ENCODE measurements at regions of chr17 and their contacts with region 1.

Region 1: DNA sequence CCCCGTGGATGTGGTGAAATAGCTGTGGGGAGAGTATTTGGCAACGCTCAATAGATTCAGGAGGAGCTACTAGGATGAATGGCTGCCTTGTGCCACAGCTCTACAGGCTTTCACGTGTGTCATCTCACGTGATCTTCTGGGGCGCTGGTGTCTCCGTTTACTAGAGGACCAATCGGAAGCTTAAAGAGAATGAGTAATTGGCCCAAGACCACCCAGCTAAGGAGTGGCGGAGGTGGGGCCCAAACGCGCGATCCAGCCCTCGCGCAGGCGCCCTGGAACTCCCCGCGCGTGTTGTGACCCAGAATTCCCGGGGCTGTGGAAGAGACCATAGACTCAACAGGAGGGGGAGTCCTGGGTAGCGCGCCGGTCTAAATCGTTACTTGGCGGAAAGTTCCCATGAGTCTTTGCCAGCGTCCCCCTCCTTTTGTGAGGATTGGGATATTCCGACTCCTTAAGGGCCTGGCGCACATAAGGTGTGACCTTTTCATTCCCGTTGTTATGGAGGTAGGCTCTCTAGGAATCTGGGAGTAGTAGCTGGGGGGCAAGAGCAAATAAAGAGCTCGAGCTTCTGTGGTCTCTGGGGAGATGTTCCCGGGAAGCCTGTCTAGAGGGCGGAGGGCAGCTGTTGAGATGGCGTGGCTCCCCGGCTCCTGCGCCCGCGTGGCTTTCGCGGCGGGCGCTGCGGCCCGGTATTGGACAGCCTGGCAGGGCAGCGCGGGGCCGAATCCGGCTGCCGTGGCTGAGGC is 23.4 kb downstream of the TRPV2 start:
- DNase-seq: peak; percentile 100
- H3K4me3 ChIP-seq: peak overlapping the region; percentile 77 to 97 (median 89)
- H3K27ac ChIP-seq: peak overlapping the region; percentile 67
- H3K4me1 ChIP-seq: peaks cover 35% of the 10 kb centered on the region
- H3K27me3 ChIP-seq: no peaks in the 10 kb centered on the region
- CTCF ChIP-seq: no peak
- POLR2A ChIP-seq: peak; percentile 99

Region 2: DNA sequence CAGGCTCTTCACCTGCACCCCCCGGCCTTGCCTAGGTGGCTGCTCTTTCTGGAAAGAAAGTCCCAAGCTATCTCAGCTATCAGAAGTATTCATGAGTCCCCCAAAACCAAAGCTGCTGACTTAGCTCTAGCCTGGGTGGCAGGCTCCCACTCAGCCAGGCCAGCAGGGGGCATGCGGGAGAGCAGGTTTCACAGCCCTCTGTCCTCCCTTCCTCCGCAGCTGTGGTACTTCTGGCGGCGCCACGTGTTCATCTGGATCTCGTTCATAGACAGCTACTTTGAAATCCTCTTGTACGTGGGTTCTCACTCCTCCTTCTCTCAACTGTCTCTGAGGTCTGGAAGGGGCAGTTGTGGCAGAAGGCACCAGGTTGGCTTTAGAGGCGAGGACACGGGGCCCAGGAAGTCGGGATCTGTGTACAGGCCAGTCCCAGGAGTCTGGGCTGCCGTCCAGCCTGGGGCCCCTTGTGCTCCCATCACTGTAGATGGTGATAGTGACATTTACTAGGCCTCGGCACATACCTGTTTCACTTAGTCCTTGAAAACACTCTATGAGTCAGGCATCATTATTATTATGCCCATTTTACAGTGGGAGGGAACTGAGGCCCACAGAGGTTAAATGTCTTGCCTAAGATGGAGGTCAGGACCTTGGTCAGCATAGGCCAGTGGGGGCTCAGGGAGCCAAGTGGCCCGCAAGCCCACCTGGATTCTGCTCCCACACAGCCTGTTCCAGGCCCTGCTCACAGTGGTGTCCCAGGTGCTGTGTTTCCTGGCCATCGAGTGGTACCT is 10.4 kb before region 1 on chr17:
- CTCF ChIA-PET with region 1: interaction called, 20 read pairs
- POLR2A ChIA-PET with region 1: interaction called, 5 read pairs
- dilution Hi-C with region 1: no loop called
- intact Hi-C with region 1: no loop called
- DNase-seq: peak; percentile 29
- H3K4me3 ChIP-seq: no peak overlapping the region
- H3K27ac ChIP-seq: no peak overlapping the region
- H3K4me1 ChIP-seq: no peaks in the 10 kb centered on the region
- H3K27me3 ChIP-seq: no peaks in the 10 kb centered on the region
- CTCF ChIP-seq: peak; percentile 61 to 81
- POLR2A ChIP-seq: no peak

Region 3: DNA sequence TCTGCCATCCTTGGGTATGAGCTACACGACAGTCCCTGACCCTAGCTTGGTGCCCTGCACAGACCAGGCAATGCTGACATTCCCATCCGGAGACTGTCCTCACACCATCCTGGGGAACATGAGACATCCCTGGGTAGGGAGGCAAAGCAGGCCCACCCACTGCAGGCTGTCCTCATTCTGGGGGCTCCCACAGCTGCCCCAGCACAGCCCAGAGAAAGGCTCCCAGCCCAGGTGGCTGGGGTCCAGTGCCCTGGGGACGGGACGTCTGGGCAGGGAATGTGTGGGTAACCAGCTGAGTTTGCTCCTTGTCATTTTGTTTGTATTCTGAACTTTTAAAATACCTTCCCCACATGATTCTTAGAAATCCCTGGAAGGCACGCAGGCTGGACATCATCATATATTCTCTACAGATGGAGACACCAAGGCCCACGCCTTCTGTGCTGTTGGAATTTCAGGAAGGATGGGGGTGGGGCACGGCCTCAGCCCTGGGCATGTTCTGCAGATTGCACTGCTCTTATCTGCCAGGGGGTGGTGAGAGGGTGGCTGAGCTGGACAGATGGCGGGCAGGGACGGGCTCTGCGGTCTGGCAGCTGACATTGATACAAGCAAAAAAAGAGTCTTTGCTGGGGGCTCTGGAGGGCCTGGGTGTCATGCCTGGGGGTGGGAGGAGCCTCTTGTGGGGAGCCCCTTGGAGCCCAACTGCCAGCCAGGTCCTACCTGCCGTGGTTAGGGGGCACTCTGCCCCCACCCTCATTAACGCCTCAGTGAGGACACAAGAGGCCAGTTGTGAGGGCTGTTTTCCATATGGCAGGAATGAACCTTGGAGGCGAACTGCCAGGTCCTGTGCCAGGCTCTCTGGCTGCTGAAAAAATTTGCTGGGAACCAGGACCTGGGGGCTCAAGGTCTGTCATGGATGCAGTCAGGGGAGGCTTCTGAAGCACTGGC is 24.9 kb after region 1 on chr17:
- CTCF ChIA-PET with region 1: no interaction called
- POLR2A ChIA-PET with region 1: no interaction called
- dilution Hi-C with region 1: no loop called
- intact Hi-C with region 1: no loop called
- DNase-seq: peak; percentile 70
- H3K4me3 ChIP-seq: no peak overlapping the region
- H3K27ac ChIP-seq: no peak overlapping the region
- H3K4me1 ChIP-seq: peaks cover 14% of the 10 kb centered on the region
- H3K27me3 ChIP-seq: no peaks in the 10 kb centered on the region
- CTCF ChIP-seq: peak; percentile 36 to 69
- POLR2A ChIP-seq: no peak

Region 4: DNA sequence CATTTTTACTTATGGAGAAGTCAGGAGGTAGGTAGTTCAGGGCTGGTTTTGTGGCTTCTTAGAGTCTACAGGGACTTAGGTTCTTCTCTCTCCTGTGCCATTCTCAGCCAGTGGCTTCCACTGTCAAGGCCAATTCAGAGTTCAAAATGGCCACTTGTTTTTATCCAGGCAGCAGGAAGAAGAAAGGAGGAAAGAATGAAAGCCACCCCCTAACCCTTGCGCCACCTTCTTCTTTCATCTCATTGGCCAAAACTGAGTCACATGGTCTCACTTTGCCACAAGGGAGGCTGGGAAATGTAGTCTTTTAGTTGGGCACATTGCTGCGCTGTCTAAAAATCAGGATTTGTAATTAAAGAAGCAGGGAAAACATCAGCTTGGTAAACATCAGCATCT is 977.3 kb after region 1 on chr17:
- CTCF ChIA-PET with region 1: no interaction called
- POLR2A ChIA-PET with region 1: no interaction called
- dilution Hi-C with region 1: no loop called
- intact Hi-C with region 1: loop called (anchors 10 kb)
- DNase-seq: peak; percentile 91
- H3K4me3 ChIP-seq: no peak overlapping the region
- H3K27ac ChIP-seq: peak overlapping the region; percentile 94
- H3K4me1 ChIP-seq: peaks cover 48% of the 10 kb centered on the region
- H3K27me3 ChIP-seq: no peaks in the 10 kb centered on the region
- CTCF ChIP-seq: no peak
- POLR2A ChIP-seq: no peak